ENCODE measurements at regions of chr16 and their contacts with region 1.

Region 1: DNA sequence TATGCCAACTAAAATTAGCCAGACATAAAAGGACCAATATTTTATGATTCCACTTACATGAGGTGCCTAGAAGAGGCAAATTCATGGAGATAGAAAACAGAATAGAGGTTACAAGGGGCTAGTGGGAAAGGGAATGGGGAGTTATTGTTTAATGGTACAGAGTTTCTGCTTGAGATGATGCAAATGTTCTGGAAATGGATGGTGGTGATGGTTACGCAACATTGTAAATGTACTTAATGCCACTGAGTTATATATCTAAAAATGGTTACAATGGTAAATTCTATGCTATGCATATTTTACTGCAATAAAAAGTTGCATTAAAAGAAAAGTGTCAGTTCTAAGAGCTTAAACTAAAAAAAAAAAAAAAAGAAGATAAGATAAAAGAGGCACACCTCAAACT is 17.9 kb downstream of the MT1X start:
- H3K4me3 ChIP-seq: no peak overlapping the region
- H3K27ac ChIP-seq: no peak overlapping the region
- H3K4me1 ChIP-seq: no peaks in the 10 kb centered on the region
- CTCF ChIP-seq: no peak

Region 2: GRCh38 chr16:55832758-55833540 is 867.2 kb before region 1 on chr16 and contains the start of gene CES1:
- CTCF ChIA-PET with region 1: no interaction called
- POLR2A ChIA-PET with region 1: no interaction called
- H3K4me3 ChIP-seq: no peak within 1 kb of the TSS
- H3K27ac ChIP-seq: no peak within 1 kb of the TSS
- H3K4me1 ChIP-seq: no peaks in the 10 kb centered on the region
- CTCF ChIP-seq: no peak

Region 3: DNA sequence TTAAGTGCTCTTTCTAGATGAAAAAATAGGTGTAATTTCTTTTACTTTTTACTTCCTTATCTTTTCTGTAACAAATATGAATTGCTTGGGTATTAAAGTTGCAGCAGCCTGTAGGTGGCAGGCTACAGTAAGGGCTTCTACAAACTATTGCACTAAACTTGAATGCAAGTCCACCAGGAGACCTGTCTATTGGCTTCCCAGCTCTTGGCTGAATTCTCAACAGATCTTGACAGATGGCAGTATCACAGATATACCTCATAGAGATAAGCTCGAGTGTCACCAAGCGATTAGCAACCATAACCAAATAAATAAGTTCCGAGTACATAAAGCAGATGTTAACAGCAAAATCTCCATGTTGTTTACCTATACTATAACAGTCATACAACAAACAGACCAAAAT is 186.2 kb before region 1 on chr16:
- CTCF ChIA-PET with region 1: interaction called, 17 read pairs
- POLR2A ChIA-PET with region 1: no interaction called
- H3K4me3 ChIP-seq: no peak overlapping the region
- H3K27ac ChIP-seq: no peak overlapping the region
- H3K4me1 ChIP-seq: 0 out of 2 replicates have a peak, but pooled peaks cover 2% of the 10 kb centered on the region
- CTCF ChIP-seq: peak; percentile 76; the same call in 1 of the 2 replicates

Region 4: GRCh38 chr16:56589141-56590039 is 110.8 kb before region 1 on chr16 and contains the start of gene MT3:
- CTCF ChIA-PET with region 1: interaction called, 16 read pairs
- POLR2A ChIA-PET with region 1: no interaction called
- H3K4me3 ChIP-seq: peak within 1 kb of the TSS; percentile 25
- H3K27ac ChIP-seq: no peak within 1 kb of the TSS
- H3K4me1 ChIP-seq: no peaks in the 10 kb centered on the region
- CTCF ChIP-seq: no peak

Region 5: GRCh38 chr16:56608043-56608875 is 91.9 kb before region 1 on chr16 and contains the start of gene MT2A:
- CTCF ChIA-PET with region 1: interaction called, 66 read pairs
- POLR2A ChIA-PET with region 1: interaction called, 3 read pairs
- H3K4me3 ChIP-seq: peak within 1 kb of the TSS; percentile 51
- H3K27ac ChIP-seq: peak within 1 kb of the TSS; percentile 20; the same call in 1 of the 2 replicates
- H3K4me1 ChIP-seq: peaks cover 3% of the 10 kb centered on the region; the same call in 1 of the 2 replicates
- CTCF ChIP-seq: no peak; the same call in 1 of the 2 replicates

Region 6: DNA sequence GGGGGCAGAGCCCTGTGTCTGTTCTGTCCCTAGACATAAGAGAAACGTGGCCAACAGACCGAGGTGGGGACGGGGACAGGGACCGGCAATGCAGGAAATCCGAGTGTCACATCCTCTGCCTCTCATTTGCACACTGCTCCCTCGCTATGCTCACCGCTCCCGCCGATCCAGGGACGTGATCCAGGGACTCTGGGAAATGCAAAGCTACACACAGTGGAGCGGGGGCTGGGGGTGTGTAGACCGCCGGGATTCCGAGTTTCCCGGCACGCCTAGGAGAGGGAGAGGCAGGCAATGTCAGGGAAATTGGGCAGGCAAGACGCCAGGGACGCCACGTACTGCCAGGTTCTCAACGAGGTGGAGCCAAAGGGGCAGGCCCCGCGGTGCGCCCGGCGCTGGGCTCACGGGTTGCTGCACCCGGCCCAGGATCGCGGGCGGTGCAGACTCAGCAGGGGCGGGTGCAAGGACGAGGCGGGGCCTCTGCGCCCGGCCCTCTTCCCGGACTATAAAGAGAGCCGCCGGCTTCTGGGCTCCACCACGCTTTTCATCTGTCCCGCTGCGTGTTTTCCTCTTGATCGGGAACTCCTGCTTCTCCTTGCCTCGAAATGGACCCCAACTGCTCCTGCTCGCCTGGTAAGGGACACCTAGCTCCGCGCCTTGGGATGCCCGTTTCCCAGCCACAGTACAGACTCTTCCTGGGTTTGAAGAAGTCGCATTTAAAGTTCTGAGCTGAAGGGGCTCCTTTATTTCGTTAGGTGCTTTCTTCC is 18.1 kb before region 1 on chr16 and contains the start of gene MT1X:
- CTCF ChIA-PET with region 1: interaction called, 12 read pairs
- POLR2A ChIA-PET with region 1: no interaction called
- H3K4me3 ChIP-seq: peak within 1 kb of the TSS; percentile 22
- H3K27ac ChIP-seq: peak within 1 kb of the TSS; percentile 29; the same call in 1 of the 2 replicates
- H3K4me1 ChIP-seq: peaks cover 3% of the 10 kb centered on the region
- CTCF ChIP-seq: no peak

Measured in HEK293 (cell line).